ENCODE measurements at regions of chr5 and their contacts with region 1.

Region 1: DNA sequence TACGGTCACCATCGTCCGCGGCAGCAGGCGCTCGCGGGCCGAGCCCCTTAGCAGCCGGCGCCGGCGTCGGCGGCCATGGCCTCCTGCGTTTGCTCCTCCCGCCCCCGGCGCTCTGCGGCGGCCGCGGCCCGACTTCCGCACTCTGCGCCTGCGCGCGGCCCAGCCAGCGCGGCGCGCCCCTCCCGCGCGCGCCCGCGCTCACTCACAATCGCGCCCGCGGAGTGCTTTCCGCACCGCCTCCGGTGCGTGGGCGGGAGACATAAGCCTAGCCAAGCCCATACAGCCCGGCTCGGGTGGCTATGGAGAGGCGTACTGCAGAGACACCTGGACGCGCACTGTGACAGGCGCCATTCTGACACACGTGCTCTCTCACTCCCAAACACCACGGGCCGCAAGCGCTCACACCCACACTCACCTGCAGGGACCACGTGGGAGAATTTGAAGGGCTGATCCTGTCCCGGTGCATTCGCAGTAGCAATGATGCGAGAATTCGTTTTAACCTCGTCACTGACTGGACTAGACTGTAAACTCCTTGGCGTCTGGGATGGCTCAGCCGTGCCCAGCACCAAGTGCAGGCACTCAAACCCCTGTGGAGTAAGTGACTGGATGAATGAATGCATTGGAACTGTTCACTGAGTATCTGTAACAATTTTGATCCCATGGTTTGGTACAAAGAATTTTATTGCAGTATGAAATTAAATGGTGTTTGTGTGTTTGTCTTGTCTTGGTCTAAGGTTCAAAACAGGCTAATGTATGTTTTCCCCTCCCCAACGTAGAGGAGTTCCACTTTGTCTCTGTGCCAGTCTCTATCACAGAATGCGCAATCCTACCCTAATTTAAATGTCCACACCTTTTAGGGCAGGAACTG is at the start of gene RNF145:
- DNase-seq: peak; percentile 67 to 94
- H3K4me3 ChIP-seq: peak within 1 kb of the TSS; percentile 94 to 100
- H3K27ac ChIP-seq: peak within 1 kb of the TSS; percentile 79 to 97
- H3K4me1 ChIP-seq: peaks cover 3 to 12% of the 10 kb centered on the region in 2 donors
- H3K27me3 ChIP-seq: no peaks in the 10 kb centered on the region
- CTCF ChIP-seq: no peak
- total RNA-seq, gene RNF145: 47.8 TPM

Region 2: DNA sequence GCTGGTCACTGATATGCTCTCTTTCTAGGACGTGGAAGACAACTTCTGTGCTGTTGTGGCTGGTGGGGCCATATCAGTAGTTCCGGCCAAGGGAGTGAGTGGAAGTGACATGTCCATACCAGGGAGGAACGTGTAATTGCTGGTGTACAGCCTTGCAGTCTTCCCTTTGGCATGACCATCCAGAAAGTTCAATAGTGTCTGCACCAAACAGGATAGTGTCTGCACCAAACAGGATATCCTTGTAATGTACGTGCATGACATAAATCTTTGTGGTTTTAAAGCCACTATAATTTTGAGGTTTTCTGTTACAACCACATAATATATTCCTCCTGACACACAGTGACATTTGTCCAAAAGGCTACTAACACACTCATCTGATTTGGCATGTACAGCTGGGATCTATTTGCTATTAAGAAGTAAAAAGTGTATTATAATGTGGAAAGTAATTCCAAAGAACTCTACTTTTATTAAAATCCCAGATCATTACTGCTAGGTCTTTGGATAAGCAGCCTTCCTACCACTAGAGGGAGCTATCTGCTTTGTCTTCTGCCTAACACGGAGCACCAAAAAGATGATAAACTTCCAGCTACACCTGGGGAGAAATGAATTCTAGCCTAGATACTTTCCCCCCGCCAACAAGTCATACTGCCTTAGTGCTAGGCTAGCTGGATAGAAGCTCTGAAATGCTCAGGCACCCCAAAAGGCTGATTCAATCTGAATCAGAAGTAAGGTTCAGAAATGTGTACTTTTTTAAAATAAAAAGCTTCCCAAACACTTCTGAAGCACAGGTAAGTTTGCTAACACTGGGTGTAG is 53.0 kb before region 1 on chr5:
- intact Hi-C with region 1: loop called (anchors 5 kb)
- DNase-seq: no peak
- H3K4me3 ChIP-seq: no peak overlapping the region
- H3K27ac ChIP-seq: peak overlapping the region in 1 of 2 donors; percentile 4
- H3K4me1 ChIP-seq: peaks cover 0 to 4% of the 10 kb centered on the region in 2 donors
- H3K27me3 ChIP-seq: no peaks in the 10 kb centered on the region
- CTCF ChIP-seq: peak; percentile 75 to 82 (median 78)

Region 3: GRCh38 chr5:159178978-159179377 is 30.7 kb before region 1 on chr5:
- intact Hi-C with region 1: loop called (anchors 2 kb)
- DNase-seq: no peak
- H3K4me3 ChIP-seq: no peak overlapping the region
- H3K27ac ChIP-seq: peak overlapping the region; percentile 31 to 60
- H3K4me1 ChIP-seq: peaks cover 0 to 20% of the 10 kb centered on the region in 2 donors
- H3K27me3 ChIP-seq: no peaks in the 10 kb centered on the region
- CTCF ChIP-seq: no peak

Region 4: GRCh38 chr5:159262859-159263567 is 53.3 kb after region 1 on chr5 and contains the start of gene UBLCP1:
- intact Hi-C with region 1: loop called (anchors 1 kb)
- DNase-seq: peak; percentile 25 to 84
- H3K4me3 ChIP-seq: peak within 1 kb of the TSS; percentile 86 to 91
- H3K27ac ChIP-seq: peak within 1 kb of the TSS; percentile 88 to 94
- H3K4me1 ChIP-seq: peaks cover 0 to 10% of the 10 kb centered on the region in 2 donors
- H3K27me3 ChIP-seq: no peaks in the 10 kb centered on the region
- CTCF ChIP-seq: no peak
- total RNA-seq, gene UBLCP1: 11.0 TPM